Pancreas (tissue), 10 donors: ENCODE measurements at regions of chr7 and their contacts with region 1.

Region 1: DNA sequence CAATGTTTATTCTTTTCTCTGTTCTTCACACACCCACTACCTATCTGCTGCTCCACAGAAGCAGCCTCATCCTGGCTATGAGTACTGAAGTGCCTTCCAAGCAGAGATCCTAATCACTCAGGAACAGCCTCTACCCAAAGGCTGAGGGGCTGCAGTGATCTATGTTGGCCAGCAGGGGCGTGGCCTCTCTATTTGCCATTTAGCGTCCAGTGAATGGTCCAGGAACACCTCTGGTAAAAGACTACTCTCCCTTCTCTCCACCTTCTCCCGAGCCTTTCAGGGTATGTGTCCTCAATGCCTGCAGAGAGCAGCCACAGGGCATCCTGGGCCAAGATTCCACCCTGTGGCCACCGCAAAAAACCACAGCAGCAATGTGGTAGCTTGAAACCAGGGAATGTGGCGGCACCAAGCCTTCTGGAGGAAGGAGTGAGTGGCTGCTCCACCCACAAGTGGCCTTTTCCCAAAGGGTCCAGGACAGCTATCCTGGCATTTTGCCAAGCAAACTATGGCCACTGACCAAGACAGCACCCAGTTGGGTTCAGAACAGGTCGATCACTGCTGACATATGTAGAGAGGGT is 70.9 kb downstream of the SYPL1 start:
- DNase-seq: peak in 1 of 6 donors; percentile 38
- ATAC-seq: peak in 3 of 4 donors; percentile 63 to 72 (median 64)
- H3K4me3 ChIP-seq: no peak overlapping the region
- H3K27ac ChIP-seq: no peak overlapping the region
- H3K4me1 ChIP-seq: peaks cover 0 to 4% (median 0%) of the 10 kb centered on the region in 3 donors
- H3K27me3 ChIP-seq: no peaks in the 10 kb centered on the region
- CTCF ChIP-seq: peak; percentile 52 to 65 (median 56)

Region 2: DNA sequence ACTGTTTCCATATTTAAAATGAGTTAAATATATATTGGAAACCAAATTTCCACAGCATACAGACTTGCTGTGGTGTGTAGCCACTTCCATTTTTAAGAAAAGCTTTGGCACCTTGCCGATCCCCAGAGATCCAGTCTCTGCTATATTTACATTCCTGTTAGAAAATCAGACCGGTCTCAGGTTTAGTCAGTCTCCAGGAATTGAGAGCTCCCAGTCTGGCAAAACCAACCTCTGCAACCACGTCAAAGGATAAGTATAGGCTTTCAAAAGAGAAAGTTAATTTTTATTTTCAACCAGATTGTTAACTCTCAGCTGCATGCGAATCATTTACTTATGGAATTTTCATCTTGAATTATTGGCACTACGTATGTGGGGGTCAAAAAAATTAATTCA is 547.3 kb before region 1 on chr7:
- intact Hi-C with region 1: no loop called
- DNase-seq: no peak
- ATAC-seq: peak in 3 of 4 donors; percentile 27 to 53 (median 49)
- H3K4me3 ChIP-seq: no peak overlapping the region
- H3K27ac ChIP-seq: peak overlapping the region in 3 of 4 donors; percentile 25 to 35 (median 28)
- H3K4me1 ChIP-seq: peaks cover 0 to 8% (median 0%) of the 10 kb centered on the region in 3 donors
- H3K27me3 ChIP-seq: no peaks in the 10 kb centered on the region
- CTCF ChIP-seq: no peak

Region 3: GRCh38 chr7:105759670-105760550 is 281.3 kb before region 1 on chr7:
- intact Hi-C with region 1: loop called in 2 of 3 experiments (anchors 10 kb)
- DNase-seq: peak in 2 of 6 donors; percentile 5 to 43
- ATAC-seq: peak in 3 of 4 donors; percentile 76 to 82 (median 82)
- H3K4me3 ChIP-seq: no peak overlapping the region
- H3K27ac ChIP-seq: no peak overlapping the region
- H3K4me1 ChIP-seq: no peaks in the 10 kb centered on the region
- H3K27me3 ChIP-seq: no peaks in the 10 kb centered on the region
- CTCF ChIP-seq: peak in 2 of 4 donors; percentile 24 to 34

Region 4: GRCh38 chr7:105934572-105935185 is 106.5 kb before region 1 on chr7:
- intact Hi-C with region 1: no loop called
- DNase-seq: peak in 4 of 6 donors; percentile 22 to 61 (median 48)
- ATAC-seq: peak; percentile 87 to 98 (median 96)
- H3K4me3 ChIP-seq: no peak overlapping the region
- H3K27ac ChIP-seq: no peak overlapping the region
- H3K4me1 ChIP-seq: peaks cover 7 to 11% (median 9%) of the 10 kb centered on the region in 3 donors
- H3K27me3 ChIP-seq: no peaks in the 10 kb centered on the region
- CTCF ChIP-seq: peak in 2 of 4 donors; percentile 24 to 30